Tibial artery (tissue), 4 donors: ENCODE measurements at regions of chrX and their contacts with region 1.

Region 1: GRCh38 chrX:48801280-48802088 is at the start of gene HDAC6:
- DNase-seq: peak; percentile 96 to 99
- H3K4me3 ChIP-seq: peak within 1 kb of the TSS; percentile 61 to 65
- H3K27ac ChIP-seq: peak within 1 kb of the TSS; percentile 93 to 95
- H3K4me1 ChIP-seq: peaks cover 0 to 8% (median 0%) of the 10 kb centered on the region in 4 donors
- H3K27me3 ChIP-seq: no peaks in the 10 kb centered on the region
- CTCF ChIP-seq: no peak

Region 2: GRCh38 chrX:48196745-48197201 is 604.7 kb before region 1 on chrX and contains the start of gene SSX5:
- intact Hi-C with region 1: no loop called
- DNase-seq: no peak
- H3K4me3 ChIP-seq: no peak within 1 kb of the TSS
- H3K27ac ChIP-seq: no peak within 1 kb of the TSS
- H3K4me1 ChIP-seq: no peaks in the 10 kb centered on the region
- H3K27me3 ChIP-seq: no peaks in the 10 kb centered on the region
- CTCF ChIP-seq: no peak

Region 3: DNA sequence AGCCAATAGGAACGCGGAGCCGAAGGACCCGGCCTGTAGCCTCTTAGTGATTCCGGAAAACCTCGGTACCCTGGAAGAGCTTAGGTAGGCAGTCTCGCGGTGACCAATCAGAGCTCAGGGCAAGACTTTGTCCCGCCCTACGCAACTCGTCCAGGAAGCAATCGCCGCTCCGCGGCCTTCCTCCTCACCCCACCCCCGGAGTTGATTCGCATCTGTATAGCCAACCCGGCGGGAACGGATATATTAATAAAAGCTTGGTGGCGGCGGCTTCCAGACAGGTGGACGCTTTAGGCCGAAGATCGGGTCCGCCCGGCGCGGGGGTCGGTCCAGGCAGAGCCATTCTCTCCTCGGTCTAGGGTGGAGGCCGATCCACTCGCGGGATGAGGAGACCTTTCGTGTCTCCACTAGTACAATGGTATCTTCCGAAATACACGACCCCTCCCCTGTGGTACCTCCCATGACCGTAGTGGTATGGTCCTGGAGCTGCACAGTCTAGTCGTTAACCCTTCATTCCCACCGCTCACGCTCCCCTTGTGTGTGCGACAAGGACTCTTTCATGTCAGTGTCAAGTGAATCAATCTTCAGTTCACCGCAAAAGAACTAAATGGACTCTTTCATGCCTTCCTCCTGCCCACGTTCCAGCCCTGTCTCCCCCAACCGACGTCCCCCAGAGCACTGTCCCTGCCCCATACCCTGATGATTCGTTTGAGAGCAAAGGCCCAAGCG is 64.1 kb before region 1 on chrX:
- intact Hi-C with region 1: loop called (anchors 5 kb)
- DNase-seq: peak; percentile 87 to 94
- H3K4me3 ChIP-seq: peak overlapping the region; percentile 66 to 67
- H3K27ac ChIP-seq: peak overlapping the region; percentile 85 to 92
- H3K4me1 ChIP-seq: peaks cover 0 to 5% (median 0%) of the 10 kb centered on the region in 4 donors
- H3K27me3 ChIP-seq: no peaks in the 10 kb centered on the region
- CTCF ChIP-seq: no peak